Dendritic cell treated with granulocyte-macrophage colony-stimulating factor and Interleukin-4, amounts not matched to agents 40 ng/mL and 50 ng/mL, for 4 days (primary cell): ENCODE measurements at regions of chr17 and their contacts with region 1.

Region 1: GRCh38 chr17:6666077-6666521 is 14.5 kb downstream of the C17orf100 start:
- H3K4me3 Mint-ChIP-seq: no peak overlapping the region
- H3K27ac Mint-ChIP-seq: no peak overlapping the region
- H3K4me1 Mint-ChIP-seq: peaks cover 50% of the 10 kb centered on the region
- H3K27me3 Mint-ChIP-seq: peaks cover 28% of the 10 kb centered on the region

Region 2: GRCh38 chr17:6413065-6413464 is 253.0 kb before region 1 on chr17:
- intact Hi-C with region 1: no loop called
- H3K4me3 Mint-ChIP-seq: no peak overlapping the region
- H3K27ac Mint-ChIP-seq: no peak overlapping the region
- H3K4me1 Mint-ChIP-seq: no peaks in the 10 kb centered on the region
- H3K27me3 Mint-ChIP-seq: peaks cover 10% of the 10 kb centered on the region

Region 3: DNA sequence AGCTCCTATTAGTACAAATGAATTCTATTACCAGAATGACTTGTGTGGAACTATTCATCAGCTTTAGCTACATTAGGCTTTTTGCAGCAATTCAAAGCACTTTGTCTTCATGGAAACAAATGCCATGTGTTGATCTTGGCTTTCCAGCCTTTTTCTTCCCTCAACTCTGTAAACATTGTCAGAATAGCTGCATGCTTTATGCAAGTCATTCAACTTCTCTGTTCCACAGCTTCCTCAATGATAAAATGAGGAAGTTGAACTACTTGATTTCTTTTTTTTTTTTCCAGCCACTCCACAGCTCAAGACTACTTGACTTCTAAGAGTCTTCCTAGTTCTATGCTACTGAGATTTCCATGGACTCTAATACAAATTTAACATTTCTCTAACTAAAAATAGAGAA is 66.7 kb before region 1 on chr17:
- intact Hi-C with region 1: no loop called
- H3K4me3 Mint-ChIP-seq: no peak overlapping the region
- H3K27ac Mint-ChIP-seq: peak overlapping the region; percentile 65
- H3K4me1 Mint-ChIP-seq: peaks cover 42% of the 10 kb centered on the region
- H3K27me3 Mint-ChIP-seq: no peaks in the 10 kb centered on the region

Region 4: GRCh38 chr17:6753006-6753445 is 86.9 kb after region 1 on chr17:
- intact Hi-C with region 1: loop called (anchors 10 kb)
- H3K4me3 Mint-ChIP-seq: no peak overlapping the region
- H3K27ac Mint-ChIP-seq: peak overlapping the region; percentile 85
- H3K4me1 Mint-ChIP-seq: peaks cover 54% of the 10 kb centered on the region
- H3K27me3 Mint-ChIP-seq: no peaks in the 10 kb centered on the region

Region 5: GRCh38 chr17:6843241-6843880 is 177.3 kb after region 1 on chr17:
- intact Hi-C with region 1: loop called (anchors 5 kb)
- H3K4me3 Mint-ChIP-seq: no peak overlapping the region
- H3K27ac Mint-ChIP-seq: no peak overlapping the region
- H3K4me1 Mint-ChIP-seq: peaks cover 10% of the 10 kb centered on the region
- H3K27me3 Mint-ChIP-seq: peaks cover 38% of the 10 kb centered on the region

Region 6: GRCh38 chr17:6894206-6894528 is 228.1 kb after region 1 on chr17:
- intact Hi-C with region 1: loop called (anchors 10 kb)
- H3K4me3 Mint-ChIP-seq: no peak overlapping the region
- H3K27ac Mint-ChIP-seq: no peak overlapping the region
- H3K4me1 Mint-ChIP-seq: peaks cover 9% of the 10 kb centered on the region
- H3K27me3 Mint-ChIP-seq: peaks cover 51% of the 10 kb centered on the region

Region 7: DNA sequence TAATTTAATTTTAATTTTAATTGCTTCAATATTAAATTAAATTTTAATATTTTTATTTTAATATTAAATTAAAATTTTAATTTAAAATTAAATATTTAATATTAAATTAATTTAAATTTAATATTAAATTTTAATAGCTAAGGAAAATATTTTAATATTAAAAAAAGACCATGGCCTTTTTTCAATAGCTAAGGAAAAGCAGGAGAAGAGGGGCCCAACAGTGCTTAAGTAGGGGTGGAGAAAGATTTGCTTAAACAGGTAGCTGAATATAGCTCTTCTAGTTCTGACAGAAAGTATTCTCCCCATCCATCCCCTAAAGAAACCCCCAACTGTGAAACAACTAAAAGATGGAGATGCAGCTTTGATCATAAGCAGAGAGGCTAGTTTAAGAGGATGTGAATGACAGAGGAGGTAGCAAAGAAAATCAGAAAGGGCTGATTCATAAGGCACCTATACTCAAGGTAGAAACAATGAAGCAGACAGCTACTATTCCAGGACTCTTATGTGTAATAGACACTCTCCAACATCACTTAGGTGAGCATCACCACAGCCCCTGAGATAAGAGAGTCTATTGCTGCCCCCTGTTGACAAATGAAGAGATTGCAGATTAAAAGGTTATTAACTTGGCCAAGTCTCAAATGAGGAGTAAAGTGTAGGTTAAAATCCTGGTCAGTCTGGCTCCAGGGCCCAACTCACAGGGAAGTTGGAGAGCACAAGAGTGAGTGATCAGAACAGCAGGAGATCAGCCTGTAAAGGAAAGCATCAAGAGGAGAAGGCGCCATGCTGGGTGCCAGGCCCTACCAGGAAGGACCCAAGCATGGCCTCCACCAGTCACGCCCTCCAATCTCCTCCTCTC is 338.5 kb after region 1 on chr17:
- intact Hi-C with region 1: loop called (anchors 10 kb)
- H3K4me3 Mint-ChIP-seq: no peak overlapping the region
- H3K27ac Mint-ChIP-seq: no peak overlapping the region
- H3K4me1 Mint-ChIP-seq: peaks cover 55% of the 10 kb centered on the region
- H3K27me3 Mint-ChIP-seq: no peaks in the 10 kb centered on the region